ENCODE measurements at regions of chr17 and their contacts with region 1.

Region 1: DNA sequence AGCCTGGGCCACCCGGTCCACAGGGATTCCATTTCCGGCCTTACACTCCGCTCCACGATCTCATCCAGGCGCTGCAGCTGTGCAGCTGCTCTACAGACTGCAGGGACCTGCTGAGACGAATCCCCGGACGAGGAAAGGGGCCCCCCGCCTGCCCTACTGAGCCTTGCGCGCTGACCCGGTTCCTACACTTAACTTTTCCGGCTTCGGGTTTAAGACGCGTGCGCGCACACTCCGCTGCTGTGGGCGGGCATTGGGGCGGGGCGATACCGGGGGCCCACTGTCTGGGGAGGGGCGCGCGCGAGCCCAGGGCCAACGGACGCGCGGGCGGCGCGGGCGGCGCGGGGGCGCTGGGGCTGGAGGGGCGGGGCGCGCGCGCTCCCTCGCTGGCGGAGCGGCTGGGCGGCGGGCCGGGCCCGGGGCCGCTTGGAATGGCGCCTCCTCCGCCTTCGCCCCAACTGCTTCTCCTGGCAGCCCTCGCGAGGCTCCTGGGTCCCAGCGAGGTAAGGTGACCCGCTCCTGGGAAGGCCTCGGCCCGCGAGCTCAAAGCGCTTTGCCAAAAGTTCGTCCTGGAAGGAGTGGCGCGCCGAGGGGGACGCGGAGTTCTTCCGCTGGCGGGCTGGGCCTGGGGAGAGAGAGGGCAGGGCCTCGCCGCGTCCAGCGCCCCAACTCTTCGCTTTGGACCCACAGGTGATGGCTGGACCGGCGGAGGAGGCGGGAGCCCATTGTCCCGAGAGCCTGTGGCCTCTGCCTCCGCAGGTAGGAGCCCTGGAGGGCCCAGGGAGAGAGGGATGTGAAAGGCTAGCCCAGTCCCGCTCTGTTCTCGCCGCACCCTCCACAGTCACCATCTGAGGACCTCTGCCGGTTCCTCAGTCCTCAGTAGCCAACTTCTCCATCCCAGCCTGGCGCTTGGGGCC is at the start of gene TP53I13:
- DNase-seq: peak in 41 of 42 donors; percentile 76 to 94 (median 85)

Region 2: GRCh38 chr17:29155227-29155965 is 413.2 kb before region 1 on chr17:
- intact Hi-C with region 1: loop called (anchors 10 kb)
- DNase-seq: peak in 12 of 42 donors; percentile 25 to 77 (median 51)

Region 3: DNA sequence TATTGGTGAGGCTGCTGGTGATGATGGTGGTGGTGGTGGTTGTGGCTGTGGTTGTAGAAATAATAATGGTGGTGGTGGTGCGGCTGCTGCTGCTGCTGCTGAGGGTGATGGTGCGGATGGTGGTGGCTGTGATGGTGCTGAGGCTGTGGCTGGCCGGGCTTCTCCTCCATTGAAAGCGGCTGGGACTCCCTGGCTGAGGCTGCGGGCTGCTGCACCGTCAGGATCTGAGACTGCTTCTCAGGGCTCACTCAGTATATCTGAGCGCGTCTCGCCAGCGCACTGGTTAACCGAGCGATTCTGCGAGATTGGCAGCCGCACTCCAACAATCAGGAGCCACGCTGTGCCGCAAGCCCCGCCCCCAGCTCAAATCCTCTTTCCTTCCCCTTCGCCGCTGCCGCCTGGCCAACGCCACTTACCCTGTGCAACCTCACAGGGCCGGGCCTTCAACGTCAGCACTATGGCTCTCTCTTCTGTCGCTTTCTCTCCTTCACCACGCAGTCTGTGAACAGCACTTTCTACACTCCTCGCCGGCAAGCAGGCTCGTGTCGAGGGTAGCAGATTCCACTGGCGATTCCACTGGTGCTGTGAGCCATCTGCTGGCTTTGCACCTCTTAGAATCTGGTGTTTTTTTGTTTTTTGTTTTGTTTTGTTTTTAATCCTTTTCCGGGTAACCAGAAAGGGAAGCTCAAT is 274.6 kb before region 1 on chr17 and contains the start of gene NUFIP2:
- intact Hi-C with region 1: loop called (anchors 10 kb)
- DNase-seq: peak; percentile 98 to 100 (median 100)

Measured in head of caudate nucleus (tissue), 42 donors.